Mucosa of descending colon (tissue), 3 donors: ENCODE measurements at regions of chr6 and their contacts with region 1.

Region 1: DNA sequence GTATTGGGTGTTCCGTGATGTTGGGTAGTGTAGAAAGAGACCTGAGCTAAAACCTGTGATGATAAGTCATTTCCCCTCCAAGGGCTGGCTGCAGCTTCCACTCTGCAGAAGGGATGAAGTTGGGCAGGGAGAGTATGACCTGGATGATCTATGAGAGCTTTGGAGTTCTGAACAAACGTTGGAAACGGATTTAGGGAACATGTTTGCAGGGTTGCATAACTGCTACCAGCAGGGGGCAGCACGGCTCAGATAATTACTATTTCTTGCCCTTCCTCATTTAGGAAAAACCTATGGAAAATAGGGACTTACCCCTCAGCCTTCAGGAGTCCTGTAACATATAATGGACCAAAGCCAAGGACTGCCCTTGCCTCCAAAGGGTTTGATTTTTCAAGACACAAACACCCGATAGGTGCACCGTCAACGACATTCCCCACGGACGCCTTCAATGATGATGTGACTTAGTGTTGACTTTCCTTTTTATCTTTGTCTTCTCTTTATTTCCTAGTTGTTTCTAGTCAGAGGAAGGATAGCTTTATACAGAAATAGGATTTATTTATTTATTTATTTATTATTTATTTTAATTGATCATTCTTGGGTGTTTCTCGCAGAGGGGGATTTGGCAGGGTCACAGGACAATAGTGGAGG is 164.9 kb upstream of the SASH1 start:
- DNase-seq: peak in 2 of 3 donors; percentile 63 to 89
- ATAC-seq: peak; percentile 43
- H3K4me3 ChIP-seq: no peak overlapping the region
- H3K4me1 ChIP-seq: no peaks in the 10 kb centered on the region
- CTCF ChIP-seq: peak; percentile 43

Region 2: GRCh38 chr6:147595961-147596360 is 581.8 kb before region 1 on chr6:
- intact Hi-C with region 1: no loop called
- DNase-seq: no peak
- ATAC-seq: no peak
- H3K4me3 ChIP-seq: no peak overlapping the region
- H3K4me1 ChIP-seq: no peaks in the 10 kb centered on the region
- CTCF ChIP-seq: no peak

Region 3: DNA sequence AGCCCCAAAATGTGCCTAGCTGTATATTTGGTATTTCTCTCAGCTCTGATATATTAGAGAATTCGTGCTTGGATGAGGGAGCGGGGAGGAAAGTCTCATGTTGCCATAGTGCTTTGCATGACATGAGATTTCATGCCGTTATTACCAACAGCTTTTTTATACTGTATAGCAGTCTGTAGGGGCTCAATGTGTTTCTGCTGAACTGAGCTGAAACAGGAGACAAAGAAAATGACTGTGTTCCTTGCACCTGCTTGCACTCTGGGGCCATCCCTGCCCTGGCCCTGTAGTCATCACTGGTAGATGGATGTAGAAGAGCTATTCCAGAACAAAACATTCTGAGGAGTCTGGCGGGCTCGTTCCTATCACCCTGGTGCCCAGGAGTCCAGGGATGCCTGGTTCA is 37.0 kb after region 1 on chr6:
- intact Hi-C with region 1: no loop called
- DNase-seq: no peak
- ATAC-seq: no peak
- H3K4me3 ChIP-seq: no peak overlapping the region
- H3K4me1 ChIP-seq: no peaks in the 10 kb centered on the region
- CTCF ChIP-seq: no peak

Region 4: DNA sequence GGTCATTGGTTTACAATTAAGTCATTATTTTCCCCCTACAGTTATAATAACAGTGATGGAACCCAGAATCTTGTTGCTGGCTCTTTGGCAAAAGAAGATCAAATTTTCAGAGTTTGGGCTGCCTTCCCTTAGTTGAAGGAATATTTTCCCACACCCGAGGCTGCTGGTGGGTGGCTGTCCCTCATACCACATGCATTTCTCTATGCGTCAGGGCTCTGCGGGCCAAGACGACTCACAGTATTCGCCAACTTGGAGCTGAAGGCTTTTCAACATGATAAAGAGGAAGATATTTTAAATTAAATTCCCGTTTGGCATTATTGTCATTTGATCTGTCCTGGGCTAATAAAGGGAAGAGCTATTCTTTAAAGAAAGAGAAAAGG is 62.7 kb after region 1 on chr6:
- intact Hi-C with region 1: loop called in 1 of 2 experiments (anchors 10 kb)
- DNase-seq: no peak
- ATAC-seq: peak; percentile 15
- H3K4me3 ChIP-seq: no peak overlapping the region
- H3K4me1 ChIP-seq: no peaks in the 10 kb centered on the region
- CTCF ChIP-seq: no peak

Region 5: GRCh38 chr6:148250975-148251685 is 73.4 kb after region 1 on chr6:
- intact Hi-C with region 1: loop called (anchors 2 to 10 kb)
- DNase-seq: no peak
- ATAC-seq: no peak
- H3K4me3 ChIP-seq: no peak overlapping the region
- H3K4me1 ChIP-seq: no peaks in the 10 kb centered on the region
- CTCF ChIP-seq: no peak

Region 6: GRCh38 chr6:148379966-148380713 is 202.4 kb after region 1 on chr6:
- intact Hi-C with region 1: no loop called
- DNase-seq: no peak
- ATAC-seq: no peak
- H3K4me3 ChIP-seq: no peak overlapping the region
- H3K4me1 ChIP-seq: no peaks in the 10 kb centered on the region
- CTCF ChIP-seq: no peak

Region 7: GRCh38 chr6:148464319-148465010 is 286.8 kb after region 1 on chr6:
- intact Hi-C with region 1: loop called (anchors 5 kb)
- DNase-seq: peak in 2 of 3 donors; percentile 57 to 81
- ATAC-seq: peak; percentile 75
- H3K4me3 ChIP-seq: no peak overlapping the region
- H3K4me1 ChIP-seq: no peaks in the 10 kb centered on the region
- CTCF ChIP-seq: peak; percentile 85